MCF 10A (cell line): ENCODE measurements at regions of chr18 and their contacts with region 1.

Region 1: GRCh38 chr18:54109131-54109683 is 115.3 kb downstream of the MBD2 start:
- DNase-seq: peak; percentile 61
- H3K4me3 Mint-ChIP-seq: no peak overlapping the region
- H3K27ac Mint-ChIP-seq: peak overlapping the region; percentile 14
- H3K4me1 Mint-ChIP-seq: peaks cover 17% of the 10 kb centered on the region
- H3K27me3 Mint-ChIP-seq: no peaks in the 10 kb centered on the region
- CTCF ChIP-seq: no peak

Region 2: DNA sequence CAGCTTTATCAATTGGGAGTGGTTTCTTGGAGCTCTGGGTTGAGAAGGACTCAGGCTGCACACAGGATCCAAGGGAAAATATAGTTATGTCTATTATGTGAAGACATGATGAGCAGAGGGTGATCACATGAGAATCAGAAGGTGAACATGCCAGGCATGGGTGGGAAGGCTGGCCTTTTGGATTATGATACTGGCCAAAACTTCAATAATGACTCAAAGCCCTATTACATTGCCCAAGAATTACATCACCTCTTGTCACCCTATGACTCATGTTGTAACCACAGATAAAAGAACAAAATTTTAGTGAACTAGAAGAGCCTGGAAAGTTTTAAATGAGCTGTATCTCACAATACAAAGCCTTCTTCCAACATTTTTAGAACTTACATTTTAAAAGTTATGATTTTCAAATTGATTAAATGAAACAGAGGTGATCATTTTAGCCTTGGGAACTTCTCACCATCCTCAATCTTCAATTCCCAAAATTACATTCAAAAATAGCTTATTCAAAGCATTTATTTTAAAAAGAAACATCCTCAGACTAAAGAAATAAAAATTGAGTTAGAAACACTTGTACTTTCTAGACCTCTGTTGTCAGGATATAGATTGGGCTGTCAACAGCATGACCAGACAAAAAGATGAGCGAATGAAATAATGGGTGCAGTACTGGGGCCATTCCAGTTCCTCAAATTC is 313.0 kb before region 1 on chr18:
- CTCF ChIA-PET with region 1: no interaction called
- POLR2A ChIA-PET with region 1: no interaction called
- intact Hi-C with region 1: loop called (anchors 1 kb)
- DNase-seq: peak; percentile 91
- H3K4me3 Mint-ChIP-seq: no peak overlapping the region
- H3K27ac Mint-ChIP-seq: peak overlapping the region; percentile 17
- H3K4me1 Mint-ChIP-seq: peaks cover 20% of the 10 kb centered on the region
- H3K27me3 Mint-ChIP-seq: no peaks in the 10 kb centered on the region
- CTCF ChIP-seq: no peak

Region 3: DNA sequence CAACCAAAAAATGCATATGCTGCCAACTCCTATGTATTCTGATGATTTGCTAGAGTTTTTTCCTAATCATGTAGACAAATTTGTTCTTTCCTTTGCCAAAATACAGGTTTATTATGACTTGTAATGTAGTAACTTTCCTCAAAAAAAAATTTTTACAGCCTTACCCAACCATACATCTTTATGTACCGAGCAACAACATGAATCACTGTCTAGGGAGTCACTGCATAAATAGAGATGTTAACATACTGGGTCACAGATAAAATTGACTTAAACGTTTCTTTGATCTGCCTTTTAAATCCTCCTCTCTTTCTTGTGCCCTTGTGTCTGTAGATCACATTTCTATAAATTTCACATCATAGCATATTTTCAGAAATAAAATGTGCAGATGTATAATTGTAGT is 28.3 kb before region 1 on chr18:
- CTCF ChIA-PET with region 1: no interaction called
- POLR2A ChIA-PET with region 1: no interaction called
- intact Hi-C with region 1: no loop called
- DNase-seq: no peak
- H3K4me3 Mint-ChIP-seq: no peak overlapping the region
- H3K27ac Mint-ChIP-seq: no peak overlapping the region
- H3K4me1 Mint-ChIP-seq: peaks cover 5% of the 10 kb centered on the region
- H3K27me3 Mint-ChIP-seq: no peaks in the 10 kb centered on the region
- CTCF ChIP-seq: no peak

Region 4: GRCh38 chr18:54127759-54128378 is 18.7 kb after region 1 on chr18:
- CTCF ChIA-PET with region 1: interaction called, 15 read pairs
- POLR2A ChIA-PET with region 1: no interaction called
- intact Hi-C with region 1: no loop called
- DNase-seq: peak; percentile 67
- H3K4me3 Mint-ChIP-seq: no peak overlapping the region
- H3K27ac Mint-ChIP-seq: no peak overlapping the region
- H3K4me1 Mint-ChIP-seq: peaks cover 9% of the 10 kb centered on the region
- H3K27me3 Mint-ChIP-seq: no peaks in the 10 kb centered on the region
- CTCF ChIP-seq: peak; percentile 59

Region 5: DNA sequence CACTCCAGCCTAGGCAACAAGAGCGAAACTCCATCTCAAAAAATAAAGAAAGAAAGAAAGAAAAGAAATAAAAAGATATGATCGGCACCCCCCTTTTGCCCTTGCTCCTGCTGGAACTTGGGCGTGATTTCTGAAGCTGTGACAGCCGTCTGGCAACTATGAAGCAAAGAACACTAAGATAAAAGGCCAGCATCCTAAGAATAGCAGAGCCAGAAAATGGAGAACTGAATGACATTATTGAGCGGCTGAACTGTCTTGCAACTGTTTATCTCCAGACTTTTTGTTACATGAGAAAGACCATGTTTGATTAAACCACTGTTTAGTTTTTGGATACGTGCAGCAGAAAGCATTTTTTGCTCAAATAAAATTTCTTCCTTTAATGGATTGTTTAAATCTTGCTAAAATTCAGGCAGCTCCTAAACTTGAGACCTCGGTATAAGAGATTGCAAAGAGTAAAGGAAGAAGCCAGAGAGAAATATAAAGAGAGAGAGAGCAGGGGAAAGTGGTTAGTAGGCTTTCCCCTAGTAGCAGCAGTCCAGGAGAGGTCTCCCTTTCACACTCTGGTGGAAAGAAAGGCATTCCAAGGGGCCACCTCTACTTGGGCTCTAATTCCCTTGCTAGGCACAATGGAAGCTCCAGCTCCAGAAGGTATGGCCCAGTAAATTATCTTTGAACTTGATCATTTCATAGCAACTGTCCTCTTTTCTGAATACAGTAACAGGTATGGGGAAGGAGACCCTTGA is 123.4 kb after region 1 on chr18:
- CTCF ChIA-PET with region 1: no interaction called
- POLR2A ChIA-PET with region 1: no interaction called
- intact Hi-C with region 1: no loop called
- DNase-seq: peak; percentile 15
- H3K4me3 Mint-ChIP-seq: no peak overlapping the region
- H3K27ac Mint-ChIP-seq: no peak overlapping the region
- H3K4me1 Mint-ChIP-seq: peaks cover 6% of the 10 kb centered on the region
- H3K27me3 Mint-ChIP-seq: no peaks in the 10 kb centered on the region
- CTCF ChIP-seq: no peak